ENCODE measurements at regions of chr10 and their contacts with region 1.

Region 1: DNA sequence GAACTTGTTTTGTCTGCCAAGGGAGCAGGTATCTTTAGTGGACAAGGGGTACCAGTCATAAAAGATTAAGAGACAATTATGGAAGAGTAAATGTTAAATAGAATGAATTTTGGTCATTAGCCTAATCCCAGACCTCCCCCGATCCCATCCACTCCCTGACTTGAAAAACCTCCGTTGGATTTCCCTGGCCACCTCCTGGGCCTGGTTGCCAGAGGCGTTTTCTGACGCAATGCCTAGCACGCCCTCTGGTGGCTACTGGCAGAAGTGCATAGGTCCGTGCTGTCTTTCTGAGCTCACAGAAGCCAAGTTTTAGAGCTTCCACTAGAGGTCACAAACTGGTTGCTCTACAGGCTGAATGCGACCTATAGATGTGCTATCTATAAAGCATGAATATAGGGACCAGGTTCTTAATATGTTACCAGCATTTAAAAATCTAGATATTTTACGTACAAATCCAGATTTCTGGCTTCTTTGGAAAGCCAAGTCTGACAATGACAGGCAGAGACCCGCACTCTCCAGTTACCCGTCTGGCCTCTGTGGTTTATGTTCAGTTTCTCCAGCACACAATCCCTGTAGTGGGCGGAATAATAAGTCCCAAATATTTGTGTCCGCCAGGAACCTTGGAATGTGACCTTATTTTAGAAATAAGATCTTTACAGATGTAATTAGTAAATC is 39.8 kb downstream of the SPOCK2 start:
- DNase-seq: peak; percentile 73 to 90 (median 82)
- H3K4me3 ChIP-seq: no peak overlapping the region
- H3K4me3 Mint-ChIP-seq: no peak overlapping the region
- H3K27ac ChIP-seq: no peak overlapping the region
- H3K27ac Mint-ChIP-seq: peak overlapping the region in 4 of 8 donors; percentile 44 to 84 (median 70)
- H3K4me1 ChIP-seq: no peaks in the 10 kb centered on the region
- H3K4me1 Mint-ChIP-seq: peaks cover 6 to 8% (median 7%) of the 10 kb centered on the region in 3 donors
- H3K27me3 ChIP-seq: no peaks in the 10 kb centered on the region
- H3K27me3 Mint-ChIP-seq: peaks cover 0 to 2% of the 10 kb centered on the region in 2 donors

Region 2: GRCh38 chr10:72061491-72061890 is 12.9 kb after region 1 on chr10:
- CTCF ChIA-PET with region 1: interaction called, 37 read pairs
- POLR2A ChIA-PET with region 1: interaction called, 3 read pairs
- DNase-seq: no peak
- H3K4me3 ChIP-seq: no peak overlapping the region
- H3K4me3 Mint-ChIP-seq: peak overlapping the region in 3 of 7 donors; percentile 26 to 85 (median 79)
- H3K27ac ChIP-seq: no peak overlapping the region
- H3K27ac Mint-ChIP-seq: peak overlapping the region in 7 of 8 donors; percentile 43 to 88 (median 83)
- H3K4me1 ChIP-seq: no peaks in the 10 kb centered on the region
- H3K4me1 Mint-ChIP-seq: peaks cover 21 to 53% (median 21%) of the 10 kb centered on the region in 3 donors
- H3K27me3 ChIP-seq: no peaks in the 10 kb centered on the region
- H3K27me3 Mint-ChIP-seq: peaks cover 0 to 8% of the 10 kb centered on the region in 2 donors

Region 3: DNA sequence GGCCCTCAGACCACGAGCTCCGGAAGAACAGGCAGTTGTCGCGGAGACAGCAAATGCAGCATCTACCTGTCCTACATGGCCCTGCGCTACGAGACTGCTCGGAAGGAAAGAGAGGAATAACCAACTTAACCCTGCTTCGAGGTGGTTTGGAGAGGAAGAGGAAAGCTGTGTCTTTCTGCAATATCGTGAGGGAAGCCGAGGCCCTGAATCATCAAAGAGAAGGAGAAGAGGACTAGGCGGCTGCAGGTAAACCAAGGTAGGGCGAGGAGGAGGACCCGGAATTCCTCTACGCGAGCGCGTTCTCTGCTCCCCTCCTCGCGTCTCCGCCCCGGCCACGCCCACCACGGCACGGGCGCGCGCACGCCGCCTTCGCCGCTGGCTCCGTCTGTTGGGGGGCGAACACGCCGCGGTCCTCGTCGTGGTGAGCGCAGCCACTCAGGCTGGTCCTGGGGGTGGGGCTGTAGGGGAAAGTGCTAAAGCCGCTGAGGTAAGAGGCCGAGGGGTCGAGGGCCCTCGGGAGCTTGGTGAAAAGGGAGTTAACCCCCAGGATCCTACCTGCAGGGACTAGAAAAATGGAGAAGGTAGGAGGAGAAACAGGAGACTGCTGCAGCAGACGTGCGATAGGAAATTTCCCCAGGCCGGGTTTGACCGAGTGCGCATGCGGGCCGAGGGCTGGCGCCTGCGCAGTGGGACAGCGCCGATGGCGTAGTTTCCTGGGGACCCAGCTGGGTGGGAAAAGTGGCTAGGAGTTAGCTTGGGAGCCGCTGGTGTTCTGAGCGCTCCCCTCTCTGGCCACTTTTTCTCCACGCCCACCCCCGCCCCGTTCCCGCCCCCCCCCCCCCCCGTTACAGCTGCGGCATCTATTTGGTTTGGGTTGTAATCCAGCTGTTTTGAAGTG is 167.3 kb after region 1 on chr10 and contains the starts of genes ANAPC16 and ASCC1:
- CTCF ChIA-PET with region 1: interaction called, 10 read pairs
- POLR2A ChIA-PET with region 1: interaction called, 4 read pairs
- DNase-seq: peak; percentile 90 to 99 (median 95)
- H3K4me3 ChIP-seq: peak within 1 kb of the TSS; percentile 99
- H3K4me3 Mint-ChIP-seq: peak within 1 kb of the TSS; percentile 94 to 100 (median 99)
- H3K27ac ChIP-seq: peak within 1 kb of the TSS; percentile 91
- H3K27ac Mint-ChIP-seq: peak within 1 kb of the TSS; percentile 92 to 100 (median 99)
- H3K4me1 ChIP-seq: peaks cover 47% of the 10 kb centered on the region
- H3K4me1 Mint-ChIP-seq: peaks cover 38 to 62% (median 53%) of the 10 kb centered on the region in 3 donors
- H3K27me3 ChIP-seq: no peaks in the 10 kb centered on the region
- H3K27me3 Mint-ChIP-seq: peaks cover 0 to 3% of the 10 kb centered on the region in 2 donors
- total RNA-seq, gene ANAPC16: 68.1 to 78.3 TPM
- total RNA-seq, gene ASCC1: 36.3 to 43.2 TPM

Region 4: DNA sequence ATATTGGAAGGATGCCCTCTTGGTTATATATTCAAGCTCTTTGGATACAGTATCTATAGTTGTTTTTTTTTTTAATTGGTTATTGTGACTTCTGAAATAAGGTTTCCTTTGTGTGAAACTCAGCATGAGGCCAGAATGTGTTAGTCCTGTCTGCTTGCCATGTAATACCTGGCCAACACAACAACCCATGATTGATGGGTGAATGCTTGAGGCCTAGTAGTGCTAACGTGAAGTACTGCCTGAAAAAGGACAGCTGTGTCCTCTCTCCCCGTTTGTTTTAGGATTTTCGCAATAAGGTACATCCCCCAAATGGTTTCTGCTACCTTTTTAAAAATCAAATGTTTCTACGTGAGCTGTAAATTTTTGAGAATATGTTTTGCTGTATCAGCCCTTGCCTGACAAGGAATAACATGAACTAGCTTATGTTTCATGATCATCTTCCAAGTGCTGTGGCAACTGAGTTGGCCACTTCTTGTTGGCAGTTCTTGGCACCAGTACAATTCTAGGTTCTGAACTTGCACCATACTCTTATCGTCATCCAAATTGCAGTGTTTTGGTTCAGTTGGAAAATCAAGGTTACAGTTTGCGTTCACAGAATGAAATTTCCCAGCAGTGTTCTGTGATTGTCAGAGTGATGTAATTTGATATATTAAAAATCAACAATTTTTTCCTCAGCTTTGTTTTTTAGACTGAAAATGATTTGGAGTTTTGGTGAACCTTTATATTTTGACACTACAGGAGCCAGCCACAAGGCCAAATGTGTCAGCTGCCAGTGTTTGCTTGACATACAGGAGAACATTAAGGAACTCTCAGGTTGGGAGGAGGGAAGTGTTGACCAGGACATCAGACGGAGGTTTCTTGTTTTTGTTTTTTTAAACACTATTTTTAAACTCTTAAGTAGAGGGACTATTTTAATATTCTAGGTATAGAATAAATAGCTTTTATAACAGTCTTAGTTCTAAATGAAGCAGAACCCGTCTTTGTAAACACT is 181.0 kb after region 1 on chr10:
- CTCF ChIA-PET with region 1: no interaction called
- POLR2A ChIA-PET with region 1: no interaction called
- DNase-seq: no peak
- H3K4me3 ChIP-seq: no peak overlapping the region
- H3K4me3 Mint-ChIP-seq: no peak overlapping the region
- H3K27ac ChIP-seq: no peak overlapping the region
- H3K27ac Mint-ChIP-seq: peak overlapping the region in 6 of 8 donors; percentile 30 to 89 (median 80)
- H3K4me1 ChIP-seq: peaks cover 32% of the 10 kb centered on the region
- H3K4me1 Mint-ChIP-seq: peaks cover 31 to 45% (median 34%) of the 10 kb centered on the region in 3 donors
- H3K27me3 ChIP-seq: no peaks in the 10 kb centered on the region
- H3K27me3 Mint-ChIP-seq: no peaks in the 10 kb centered on the region

Region 5: DNA sequence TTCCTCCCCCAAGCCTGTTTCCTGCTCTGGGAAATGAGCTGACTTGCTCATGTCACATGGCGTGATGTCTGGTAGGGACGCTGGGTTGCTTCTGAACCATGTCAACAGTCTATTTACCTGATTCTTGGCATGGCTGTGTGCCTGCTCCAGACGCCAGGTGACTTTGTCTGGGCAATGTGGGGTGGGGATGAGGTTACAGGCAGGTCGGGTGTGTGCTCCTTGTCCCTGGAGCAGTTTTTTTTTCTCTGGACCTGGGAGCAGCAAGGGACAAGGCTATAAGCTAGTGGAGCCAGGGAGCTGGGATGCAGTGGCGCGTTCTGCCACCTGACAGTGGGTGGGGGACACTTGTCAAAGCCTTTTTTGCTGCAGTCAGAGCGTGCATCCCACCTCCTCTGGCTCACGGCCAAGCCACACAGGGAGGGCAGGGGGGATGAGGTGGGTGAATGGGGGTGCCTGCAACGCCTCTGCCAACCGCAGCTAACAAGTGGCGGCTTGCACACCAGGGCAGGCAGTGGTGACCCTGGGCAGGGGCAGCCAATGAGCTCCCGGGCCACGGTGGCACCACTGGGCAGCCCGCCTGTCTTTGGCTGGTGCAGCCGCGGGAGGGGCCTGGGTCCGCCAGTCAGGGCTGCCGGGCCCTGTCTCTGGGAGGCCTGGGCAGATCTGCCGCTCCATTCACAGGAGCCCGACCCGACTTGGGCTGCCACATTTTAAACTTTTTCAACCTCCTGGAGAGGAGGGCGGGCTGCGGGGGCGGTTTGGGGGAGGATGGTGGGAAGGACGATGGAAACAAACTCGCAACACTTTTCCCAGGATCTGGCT is 283.2 kb after region 1 on chr10:
- CTCF ChIA-PET with region 1: interaction called, 14 read pairs
- POLR2A ChIA-PET with region 1: interaction called, 3 read pairs
- DNase-seq: peak; percentile 86 to 98 (median 95)
- H3K4me3 ChIP-seq: peak overlapping the region; percentile 39
- H3K4me3 Mint-ChIP-seq: peak overlapping the region; percentile 55 to 89 (median 79)
- H3K27ac ChIP-seq: peak overlapping the region; percentile 3
- H3K27ac Mint-ChIP-seq: peak overlapping the region; percentile 87 to 98 (median 96)
- H3K4me1 ChIP-seq: peaks cover 97% of the 10 kb centered on the region
- H3K4me1 Mint-ChIP-seq: peaks cover 74 to 94% (median 89%) of the 10 kb centered on the region in 3 donors
- H3K27me3 ChIP-seq: no peaks in the 10 kb centered on the region
- H3K27me3 Mint-ChIP-seq: peaks cover 0 to 1% of the 10 kb centered on the region in 2 donors